Mammary epithelial cell (primary cell): ENCODE measurements at regions of chr5 and their contacts with region 1.

Region 1: DNA sequence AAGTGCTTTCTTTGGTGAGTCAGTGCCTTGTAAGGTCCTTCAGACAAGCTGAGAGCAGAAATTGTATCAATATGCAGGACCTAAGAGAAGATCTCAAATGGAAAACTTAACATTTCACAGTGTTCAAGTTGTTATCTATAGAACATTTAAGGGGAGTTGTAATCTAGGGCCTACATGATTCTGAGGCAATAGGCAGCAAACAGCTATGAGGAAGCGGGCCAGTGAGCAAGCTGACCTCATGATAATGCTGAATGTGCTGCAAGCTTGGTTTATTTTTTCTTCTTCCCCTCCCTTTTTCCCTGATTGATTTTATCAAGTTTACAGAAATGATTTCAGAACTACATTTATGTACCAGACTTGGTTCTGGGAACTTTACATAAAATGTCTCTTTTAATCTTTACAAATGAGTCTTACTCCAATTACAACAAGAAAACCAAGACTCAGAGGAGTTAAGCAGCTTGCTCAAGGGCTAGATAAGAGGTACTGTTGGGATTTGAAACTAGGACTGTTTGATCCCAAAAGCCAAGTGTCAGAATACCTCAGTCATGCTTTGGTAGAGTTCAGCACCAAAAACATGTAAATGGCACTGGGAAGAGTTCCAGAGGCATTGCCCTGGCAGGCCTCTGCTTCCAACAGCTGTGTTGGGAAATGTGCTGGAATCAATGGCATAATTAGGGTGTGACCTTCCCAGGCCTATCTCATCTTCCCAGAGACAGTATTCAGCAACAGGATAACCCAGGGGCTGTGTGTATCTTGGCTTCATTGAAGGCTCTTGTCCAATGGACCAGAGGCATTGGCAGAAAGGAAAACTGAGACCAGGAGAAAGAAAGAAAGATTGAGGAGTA is 130.1 kb downstream of the LRRC70 start:
- DNase-seq: no peak
- H3K4me3 ChIP-seq: no peak overlapping the region
- H3K27ac ChIP-seq: no peak overlapping the region
- H3K4me1 ChIP-seq: no peaks in the 10 kb centered on the region
- H3K27me3 ChIP-seq: no peaks in the 10 kb centered on the region
- CTCF ChIP-seq: no peak

Region 2: GRCh38 chr5:62376064-62376463 is 332.6 kb before region 1 on chr5:
- CTCF ChIA-PET with region 1: no interaction called
- dilution Hi-C with region 1: no loop called
- in situ Hi-C with region 1: no loop called
- intact Hi-C with region 1: no loop called
- DNase-seq: peak; percentile 46
- H3K4me3 ChIP-seq: no peak overlapping the region
- H3K27ac ChIP-seq: peak overlapping the region; percentile 19
- H3K4me1 ChIP-seq: peaks cover 7% of the 10 kb centered on the region
- H3K27me3 ChIP-seq: no peaks in the 10 kb centered on the region
- CTCF ChIP-seq: no peak

Region 3: DNA sequence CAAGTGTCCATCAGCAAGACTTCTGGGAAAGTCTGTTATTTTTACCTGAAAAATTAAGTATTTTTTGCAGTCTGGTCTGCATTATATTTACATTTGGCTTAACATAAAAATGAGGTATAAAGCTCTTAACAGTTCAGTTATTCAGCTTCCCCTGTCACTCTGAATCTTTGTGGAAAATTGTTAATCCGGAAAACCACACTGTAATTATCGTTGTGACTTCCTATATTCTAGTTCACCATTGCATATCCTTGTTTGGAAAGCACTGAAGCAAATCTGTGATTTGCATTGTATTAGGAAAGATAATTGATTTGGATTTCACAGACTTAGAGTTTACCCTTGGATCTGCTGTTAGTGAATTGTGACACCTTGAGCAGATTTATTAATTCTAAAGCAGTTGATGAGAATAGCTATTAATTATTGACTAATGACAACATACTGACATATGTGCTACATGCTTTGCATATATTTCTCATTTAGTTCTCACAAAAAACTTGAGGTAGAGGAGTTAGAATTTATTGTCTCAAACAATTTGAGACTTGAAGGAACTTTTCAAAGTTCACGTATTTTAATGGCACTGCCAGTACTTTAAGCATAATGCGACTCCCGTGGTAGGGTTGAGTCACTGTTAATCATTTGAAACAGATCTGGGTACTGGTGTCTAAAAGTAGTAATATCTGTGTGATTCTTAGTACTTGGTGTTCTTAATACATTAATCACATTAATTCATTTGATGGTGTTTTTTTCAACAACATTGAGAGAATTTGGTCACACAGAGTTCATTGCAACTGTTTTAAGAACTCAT is 201.8 kb before region 1 on chr5:
- CTCF ChIA-PET with region 1: no interaction called
- dilution Hi-C with region 1: no loop called
- in situ Hi-C with region 1: no loop called
- intact Hi-C with region 1: no loop called
- DNase-seq: no peak
- H3K4me3 ChIP-seq: no peak overlapping the region
- H3K27ac ChIP-seq: no peak overlapping the region
- H3K4me1 ChIP-seq: no peaks in the 10 kb centered on the region
- H3K27me3 ChIP-seq: no peaks in the 10 kb centered on the region
- CTCF ChIP-seq: no peak

Region 4: GRCh38 chr5:62562867-62563266 is 145.8 kb before region 1 on chr5:
- CTCF ChIA-PET with region 1: no interaction called
- dilution Hi-C with region 1: no loop called
- in situ Hi-C with region 1: no loop called
- intact Hi-C with region 1: no loop called
- DNase-seq: no peak
- H3K4me3 ChIP-seq: no peak overlapping the region
- H3K27ac ChIP-seq: no peak overlapping the region
- H3K4me1 ChIP-seq: no peaks in the 10 kb centered on the region
- H3K27me3 ChIP-seq: no peaks in the 10 kb centered on the region
- CTCF ChIP-seq: peak in 1 of 2 donors; percentile 7

Region 5: DNA sequence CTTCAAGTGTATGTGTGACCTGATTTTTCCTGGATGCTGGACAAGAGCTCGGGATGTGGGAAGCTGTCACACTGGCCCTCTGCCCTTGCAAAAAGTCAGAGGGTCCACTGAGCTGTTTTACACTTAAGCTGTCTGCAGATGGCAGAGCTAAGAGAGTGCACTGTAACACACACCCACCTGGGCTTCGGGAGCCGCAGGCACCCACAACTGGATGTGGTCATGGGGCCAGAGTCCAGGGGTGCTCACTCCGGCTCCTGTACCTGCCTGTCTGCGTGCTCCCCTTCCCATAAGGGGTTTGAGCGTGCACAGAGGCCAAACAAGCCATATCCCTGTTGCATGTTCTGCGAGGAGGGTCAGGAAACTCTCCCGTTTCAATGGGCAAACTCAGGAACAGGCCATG is 47.6 kb before region 1 on chr5:
- CTCF ChIA-PET with region 1: no interaction called
- dilution Hi-C with region 1: no loop called
- in situ Hi-C with region 1: no loop called
- intact Hi-C with region 1: no loop called
- DNase-seq: no peak
- H3K4me3 ChIP-seq: no peak overlapping the region
- H3K27ac ChIP-seq: no peak overlapping the region
- H3K4me1 ChIP-seq: no peaks in the 10 kb centered on the region
- H3K27me3 ChIP-seq: no peaks in the 10 kb centered on the region
- CTCF ChIP-seq: no peak

Region 6: DNA sequence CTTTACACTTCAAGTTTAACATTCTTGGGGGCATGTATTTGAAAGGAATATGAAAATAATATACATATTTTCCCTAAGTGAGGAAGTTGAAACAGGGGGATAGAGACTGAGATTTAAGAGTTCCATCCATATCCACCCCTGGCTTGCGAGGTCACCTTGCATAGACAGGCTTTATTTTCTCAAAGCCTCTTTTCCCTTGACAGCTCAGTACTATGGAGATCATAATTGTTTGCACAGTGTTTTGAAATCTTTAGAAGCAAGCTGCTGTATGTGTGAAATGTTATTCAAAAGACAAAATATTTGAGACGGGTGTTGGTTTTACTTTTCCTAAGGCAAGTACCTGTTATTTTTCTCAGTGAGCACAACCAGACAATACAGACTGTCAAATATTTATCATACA is 33.1 kb after region 1 on chr5:
- CTCF ChIA-PET with region 1: no interaction called
- dilution Hi-C with region 1: no loop called
- in situ Hi-C with region 1: no loop called
- intact Hi-C with region 1: loop called (anchors 1 kb)
- DNase-seq: no peak
- H3K4me3 ChIP-seq: no peak overlapping the region
- H3K27ac ChIP-seq: no peak overlapping the region
- H3K4me1 ChIP-seq: no peaks in the 10 kb centered on the region
- H3K27me3 ChIP-seq: peaks cover 2% of the 10 kb centered on the region
- CTCF ChIP-seq: no peak